WTC11 (cell line): ENCODE measurements at regions of chr6 and their contacts with region 1.

Region 1: GRCh38 chr6:5085193-5085647 is at the start of gene PPP1R3G:
- DNase-seq: peak; percentile 29
- ATAC-seq: peak; percentile 23
- H3K4me3 Mint-ChIP-seq: peak within 1 kb of the TSS; percentile 79
- H3K27ac Mint-ChIP-seq: no peak within 1 kb of the TSS
- H3K4me1 Mint-ChIP-seq: peaks cover 10% of the 10 kb centered on the region
- H3K27me3 Mint-ChIP-seq: peaks cover 71% of the 10 kb centered on the region
- CTCF ChIP-seq: no peak
- total RNA-seq, gene PPP1R3G: 0.15 to 0.48 TPM (median 0.48 TPM) in 3 replicates

Region 2: GRCh38 chr6:5030596-5031136 is 54.6 kb before region 1 on chr6:
- CTCF ChIA-PET with region 1: interaction called, 11 read pairs
- POLR2A ChIA-PET with region 1: interaction called, 3 read pairs
- DNase-seq: peak; percentile 93
- ATAC-seq: peak; percentile 73
- H3K4me3 Mint-ChIP-seq: no peak overlapping the region
- H3K27ac Mint-ChIP-seq: no peak overlapping the region
- H3K4me1 Mint-ChIP-seq: peaks cover 46% of the 10 kb centered on the region
- H3K27me3 Mint-ChIP-seq: peaks cover 7% of the 10 kb centered on the region
- CTCF ChIP-seq: peak; percentile 72

Region 3: DNA sequence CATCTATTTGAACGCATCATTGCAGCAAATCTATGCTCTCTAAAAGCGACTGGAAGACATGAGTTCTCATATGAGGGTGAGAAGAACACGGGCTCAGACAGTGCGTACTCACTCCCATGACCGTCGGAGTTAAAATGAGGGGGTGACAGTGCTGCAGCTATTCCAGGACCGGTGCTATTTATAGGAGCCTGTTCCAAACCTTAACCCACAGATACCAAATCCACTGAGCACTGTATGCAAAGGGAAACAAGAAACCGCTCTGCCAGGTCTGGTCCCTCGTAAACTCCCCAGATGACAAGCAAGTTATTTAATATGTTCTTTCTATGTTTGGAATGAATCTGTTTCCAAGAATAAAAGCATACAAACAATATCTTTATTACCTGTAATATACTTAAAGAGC is 22.8 kb after region 1 on chr6:
- CTCF ChIA-PET with region 1: no interaction called
- POLR2A ChIA-PET with region 1: no interaction called
- DNase-seq: no peak
- ATAC-seq: no peak
- H3K4me3 Mint-ChIP-seq: no peak overlapping the region
- H3K27ac Mint-ChIP-seq: no peak overlapping the region
- H3K4me1 Mint-ChIP-seq: peaks cover 17% of the 10 kb centered on the region
- H3K27me3 Mint-ChIP-seq: no peaks in the 10 kb centered on the region
- CTCF ChIP-seq: no peak

Region 4: DNA sequence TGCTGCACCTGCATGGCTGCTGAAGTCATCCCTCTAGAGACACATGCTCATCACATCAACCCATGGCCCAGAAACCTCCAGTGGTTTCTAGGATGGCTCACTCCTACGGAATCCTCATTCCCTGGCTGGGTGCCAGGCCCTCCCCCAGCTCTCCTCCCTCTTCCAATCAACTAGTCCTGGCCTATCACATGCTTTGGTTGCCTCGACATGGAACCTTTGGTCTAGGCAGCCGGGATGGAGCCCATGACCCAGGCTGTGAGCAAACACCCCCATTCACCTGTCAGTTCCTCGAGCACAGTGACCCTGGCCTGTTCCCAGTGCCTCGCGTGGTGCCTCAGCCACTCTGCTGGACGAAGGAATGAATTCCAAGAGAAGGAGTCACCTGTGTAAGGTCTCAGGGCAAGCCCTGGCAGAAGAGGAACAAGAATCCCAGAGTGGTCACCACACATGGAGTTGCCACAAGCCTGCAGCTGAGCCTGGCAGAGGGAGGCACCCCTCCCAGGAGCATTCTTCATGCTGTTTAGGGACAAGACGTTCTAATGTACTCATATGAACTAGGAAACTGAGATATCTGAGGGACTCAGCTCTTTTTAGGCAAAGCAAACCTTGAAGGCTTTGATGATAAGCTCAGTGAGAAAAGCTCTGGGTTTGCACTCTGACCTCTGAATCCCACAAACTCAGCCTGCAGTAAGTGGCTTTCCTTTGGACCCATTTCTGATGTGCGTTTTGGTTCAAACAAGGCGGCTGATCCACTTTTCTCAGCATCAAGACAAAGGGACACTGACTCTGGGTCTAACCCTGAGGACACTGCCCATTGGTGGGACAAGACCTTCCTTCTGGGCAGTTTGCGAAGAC is 40.2 kb after region 1 on chr6:
- CTCF ChIA-PET with region 1: no interaction called
- POLR2A ChIA-PET with region 1: no interaction called
- DNase-seq: no peak
- ATAC-seq: no peak
- H3K4me3 Mint-ChIP-seq: no peak overlapping the region
- H3K27ac Mint-ChIP-seq: no peak overlapping the region
- H3K4me1 Mint-ChIP-seq: peaks cover 17% of the 10 kb centered on the region
- H3K27me3 Mint-ChIP-seq: no peaks in the 10 kb centered on the region
- CTCF ChIP-seq: no peak

Region 5: DNA sequence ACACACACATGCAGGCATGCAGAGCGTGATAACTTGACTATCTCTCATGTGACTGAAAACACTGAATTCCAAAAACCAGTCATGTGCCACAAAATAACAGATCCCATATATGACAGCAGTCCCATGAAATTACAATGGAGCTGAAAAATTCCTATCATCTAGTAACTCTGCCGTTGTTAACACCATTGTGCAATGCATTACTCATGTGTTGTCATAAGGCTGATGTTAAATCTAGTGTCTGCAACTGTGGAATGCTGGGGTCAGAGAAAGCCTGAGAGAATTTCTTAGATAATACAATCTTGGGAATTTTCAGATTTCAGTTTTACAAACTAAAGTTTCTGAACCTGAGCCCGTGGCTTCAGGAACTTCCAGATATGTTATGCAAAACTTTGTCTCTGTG is 105.3 kb after region 1 on chr6:
- CTCF ChIA-PET with region 1: no interaction called
- POLR2A ChIA-PET with region 1: no interaction called
- DNase-seq: no peak
- ATAC-seq: no peak
- H3K4me3 Mint-ChIP-seq: no peak overlapping the region
- H3K27ac Mint-ChIP-seq: no peak overlapping the region
- H3K4me1 Mint-ChIP-seq: peaks cover 16% of the 10 kb centered on the region
- H3K27me3 Mint-ChIP-seq: no peaks in the 10 kb centered on the region
- CTCF ChIP-seq: no peak